Activated naive CD4-positive, alpha-beta T cell treated with anti-CD3 and anti-CD28 coated beads for 36 hours (primary cell): ENCODE measurements at regions of chr15 and their contacts with region 1.

Region 1: DNA sequence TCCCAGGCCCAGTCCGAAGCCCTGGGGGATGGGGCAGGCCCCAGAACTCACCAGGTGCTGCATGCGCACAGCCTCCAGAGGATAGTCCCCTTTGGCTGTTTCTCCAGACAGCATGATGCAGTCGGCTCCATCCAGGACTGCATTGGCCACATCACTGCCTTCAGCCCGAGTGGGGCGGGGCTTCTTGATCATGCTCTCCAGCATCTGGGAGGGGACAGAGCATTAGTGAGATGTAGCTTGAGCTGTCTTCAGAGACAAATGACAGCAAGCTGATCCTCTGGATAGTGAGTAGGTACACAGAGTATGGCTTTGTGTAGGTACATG is 9.1 kb upstream of the GRAMD2A start:
- DNase-seq: no peak
- H3K4me3 Mint-ChIP-seq: no peak overlapping the region
- H3K27ac Mint-ChIP-seq: peak overlapping the region; percentile 69
- H3K4me1 Mint-ChIP-seq: peaks cover 47% of the 10 kb centered on the region
- H3K27me3 Mint-ChIP-seq: no peaks in the 10 kb centered on the region

Region 2: GRCh38 chr15:72168111-72168808 is 38.4 kb before region 1 on chr15:
- CTCF ChIA-PET with region 1: no interaction called
- intact Hi-C with region 1: no loop called
- DNase-seq: no peak
- H3K4me3 Mint-ChIP-seq: no peak overlapping the region
- H3K27ac Mint-ChIP-seq: no peak overlapping the region
- H3K4me1 Mint-ChIP-seq: no peaks in the 10 kb centered on the region
- H3K27me3 Mint-ChIP-seq: no peaks in the 10 kb centered on the region

Region 3: DNA sequence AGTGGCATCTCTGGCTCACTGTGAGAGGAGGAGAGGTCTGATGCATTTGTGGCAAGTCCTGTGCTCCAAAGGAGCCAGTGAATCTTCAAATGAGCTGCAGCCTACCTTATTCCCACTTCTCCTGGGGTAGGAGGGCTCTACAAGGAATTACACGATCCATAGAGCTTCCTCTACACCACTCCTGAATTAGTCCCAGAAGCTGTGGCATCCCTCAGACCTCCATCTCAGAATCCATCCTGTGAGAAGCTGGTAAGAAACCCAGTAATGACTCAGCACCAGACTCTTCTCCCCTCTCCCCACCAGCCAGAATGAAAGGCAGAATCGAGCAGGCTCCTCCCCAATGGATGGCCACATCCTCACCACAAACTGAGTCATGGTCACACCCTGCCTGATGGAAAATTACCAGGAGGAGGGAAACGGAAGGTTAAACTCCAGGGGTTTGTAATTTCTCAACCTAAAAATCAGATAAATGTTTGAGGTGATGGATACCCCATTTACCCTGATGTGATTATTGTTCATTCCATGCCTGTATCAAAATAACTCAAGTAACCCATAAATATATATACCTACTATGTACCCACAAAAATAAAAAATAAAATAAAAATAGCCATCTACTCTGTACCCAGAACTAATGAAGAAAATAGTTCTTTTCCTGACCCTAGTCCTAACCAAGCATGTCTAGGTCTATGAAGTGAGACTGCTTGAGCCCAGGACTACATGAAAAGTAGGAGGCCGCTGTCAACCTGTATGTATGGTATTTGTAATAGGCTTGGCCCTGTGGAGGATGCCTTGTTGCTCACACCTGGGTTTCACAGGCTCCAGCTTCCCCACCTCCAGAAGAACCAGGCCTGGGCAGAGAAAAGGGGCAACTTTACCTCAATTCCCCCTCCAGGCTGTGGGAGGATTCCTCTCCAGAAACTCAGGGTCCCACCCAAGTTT is 30.9 kb after region 1 on chr15:
- CTCF ChIA-PET with region 1: interaction called, 3 read pairs
- intact Hi-C with region 1: loop called (anchors 1 kb)
- DNase-seq: peak; percentile 91
- H3K4me3 Mint-ChIP-seq: peak overlapping the region; percentile 67
- H3K27ac Mint-ChIP-seq: peak overlapping the region; percentile 81
- H3K4me1 Mint-ChIP-seq: peaks cover 42% of the 10 kb centered on the region
- H3K27me3 Mint-ChIP-seq: no peaks in the 10 kb centered on the region

Region 4: DNA sequence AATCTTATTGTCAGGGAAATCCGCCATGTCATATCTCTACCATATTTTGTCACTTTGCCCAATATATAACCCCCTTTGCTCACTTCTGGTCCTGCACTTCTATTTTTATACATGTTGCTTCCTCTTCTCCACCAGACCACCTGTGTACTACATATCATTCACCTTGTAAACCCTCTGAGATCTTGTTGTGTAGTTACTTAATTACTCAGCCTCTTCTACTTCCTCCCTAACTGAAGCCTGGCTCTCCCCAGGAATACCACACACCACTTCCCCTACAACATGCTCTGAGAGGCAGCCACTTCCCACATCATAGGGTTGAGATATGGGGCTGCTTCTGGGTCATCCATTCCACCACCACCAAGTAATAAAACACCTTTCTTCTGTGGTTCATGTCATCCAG is 159.2 kb after region 1 on chr15:
- CTCF ChIA-PET with region 1: no interaction called
- intact Hi-C with region 1: no loop called
- DNase-seq: peak; percentile 7
- H3K4me3 Mint-ChIP-seq: no peak overlapping the region
- H3K27ac Mint-ChIP-seq: no peak overlapping the region
- H3K4me1 Mint-ChIP-seq: peaks cover 33% of the 10 kb centered on the region
- H3K27me3 Mint-ChIP-seq: no peaks in the 10 kb centered on the region